Right lobe of liver (tissue), 6 donors: ENCODE measurements at regions of chr10 and their contacts with region 1.

Region 1: GRCh38 chr10:44386546-44387052 is 1.7 kb upstream of the CXCL12 start:
- DNase-seq: peak; percentile 68 to 72 (median 71)
- ATAC-seq: peak; percentile 73 to 86 (median 83)
- H3K4me3 ChIP-seq: no peak overlapping the region
- H3K27ac ChIP-seq: no peak overlapping the region
- H3K4me1 ChIP-seq: peaks cover 0 to 24% (median 0%) of the 10 kb centered on the region in 4 donors
- H3K27me3 ChIP-seq: no peaks in the 10 kb centered on the region
- CTCF ChIP-seq: peak; percentile 70 to 93 (median 90)
- POLR2A ChIP-seq: no peak

Region 2: DNA sequence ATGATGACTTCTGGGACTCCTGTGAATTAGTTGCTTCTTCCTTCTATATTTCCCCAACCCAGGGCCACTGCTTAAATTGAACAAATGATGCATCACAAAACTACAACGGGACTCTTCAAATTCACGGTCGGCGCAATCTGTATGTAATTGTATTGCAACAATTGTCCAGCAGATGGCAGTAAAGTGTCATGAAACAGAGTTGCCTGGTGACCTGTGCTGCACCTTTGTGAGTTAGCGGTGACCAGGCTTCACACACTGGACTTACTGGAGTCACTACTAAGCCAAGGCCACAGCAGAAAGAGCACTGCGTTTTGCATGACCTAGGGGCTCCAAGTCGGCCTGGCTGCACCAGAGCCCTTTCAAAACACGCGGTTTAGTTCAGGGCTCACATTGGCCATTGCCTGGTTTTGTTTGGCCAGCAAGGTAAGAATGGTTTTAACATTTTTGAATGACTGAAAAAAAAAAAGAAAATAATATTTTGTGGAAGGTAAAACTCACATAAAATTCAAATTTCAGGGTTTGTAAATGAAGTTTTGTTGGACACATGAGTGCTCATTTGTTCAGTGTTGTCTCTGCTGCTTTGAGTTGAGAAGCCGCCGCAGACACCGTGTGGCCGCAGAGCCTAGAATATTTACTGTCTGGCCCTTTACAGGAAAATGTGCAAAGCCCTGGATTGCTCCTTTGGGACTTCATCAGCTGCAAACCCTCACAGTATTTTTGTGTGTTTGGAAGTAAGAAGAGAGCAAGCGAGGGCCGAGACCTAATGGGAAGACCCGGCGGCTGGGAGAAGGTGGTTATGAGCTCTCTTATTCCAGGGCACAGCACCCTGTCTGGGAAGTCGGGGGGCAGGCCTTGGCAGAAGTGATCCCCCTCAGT is 714.7 kb before region 1 on chr10:
- intact Hi-C with region 1: loop called (anchors 5 to 10 kb)
- DNase-seq: peak in 2 of 3 donors; percentile 45 to 69
- ATAC-seq: peak; percentile 88 to 97 (median 94)
- H3K4me3 ChIP-seq: no peak overlapping the region
- H3K27ac ChIP-seq: no peak overlapping the region
- H3K4me1 ChIP-seq: no peaks in the 10 kb centered on the region
- H3K27me3 ChIP-seq: no peaks in the 10 kb centered on the region
- CTCF ChIP-seq: peak; percentile 72 to 91 (median 78)
- POLR2A ChIP-seq: no peak

Region 3: GRCh38 chr10:43689955-43690771 is 696.4 kb before region 1 on chr10:
- intact Hi-C with region 1: loop called in 1 of 2 experiments (anchors 5 kb)
- DNase-seq: peak; percentile 86 to 88 (median 87)
- ATAC-seq: peak; percentile 95 to 97 (median 96)
- H3K4me3 ChIP-seq: peak overlapping the region; percentile 49 to 64 (median 59)
- H3K27ac ChIP-seq: peak overlapping the region; percentile 37 to 66 (median 63)
- H3K4me1 ChIP-seq: peaks cover 0 to 26% (median 0%) of the 10 kb centered on the region in 4 donors
- H3K27me3 ChIP-seq: no peaks in the 10 kb centered on the region
- CTCF ChIP-seq: peak; percentile 75 to 89 (median 87)
- POLR2A ChIP-seq: peak; percentile 14

Region 4: DNA sequence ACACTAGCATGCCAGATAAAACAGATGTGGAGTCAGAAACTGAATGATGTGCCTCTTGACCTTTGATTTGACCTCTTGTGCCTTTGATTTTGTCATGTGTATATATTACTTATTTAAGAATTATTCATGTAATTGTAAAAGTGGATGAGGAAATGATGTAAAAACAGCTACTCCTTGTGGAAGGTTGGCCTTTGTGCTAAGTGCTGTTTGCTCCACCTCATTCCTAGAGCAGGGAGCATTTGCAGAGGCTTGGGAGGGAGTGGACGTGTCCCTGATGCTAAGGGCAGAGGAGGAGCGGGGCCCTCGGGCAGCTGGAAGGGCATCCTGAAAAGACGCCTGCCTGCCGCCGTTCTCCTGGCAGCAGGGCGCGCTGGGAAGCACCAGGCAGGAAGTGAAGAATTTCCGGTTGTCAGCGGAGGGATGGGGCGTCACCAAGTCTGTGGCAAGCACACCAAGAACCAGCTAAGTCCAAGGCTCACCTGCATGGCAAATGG is 540.4 kb before region 1 on chr10:
- intact Hi-C with region 1: no loop called
- DNase-seq: no peak
- ATAC-seq: peak; percentile 72 to 75 (median 74)
- H3K4me3 ChIP-seq: no peak overlapping the region
- H3K27ac ChIP-seq: no peak overlapping the region
- H3K4me1 ChIP-seq: no peaks in the 10 kb centered on the region
- H3K27me3 ChIP-seq: no peaks in the 10 kb centered on the region
- CTCF ChIP-seq: no peak
- POLR2A ChIP-seq: no peak

Region 5: GRCh38 chr10:44857363-44858016 is 470.9 kb after region 1 on chr10:
- intact Hi-C with region 1: loop called in 1 of 2 experiments (anchors 10 kb)
- DNase-seq: peak in 2 of 3 donors; percentile 53 to 70
- ATAC-seq: peak; percentile 80 to 91 (median 84)
- H3K4me3 ChIP-seq: no peak overlapping the region
- H3K27ac ChIP-seq: no peak overlapping the region
- H3K4me1 ChIP-seq: peaks cover 0 to 6% (median 0%) of the 10 kb centered on the region in 4 donors
- H3K27me3 ChIP-seq: no peaks in the 10 kb centered on the region
- CTCF ChIP-seq: peak; percentile 89 to 98 (median 98)
- POLR2A ChIP-seq: no peak